ENCODE measurements at regions of chr20 and their contacts with region 1.

Region 1: DNA sequence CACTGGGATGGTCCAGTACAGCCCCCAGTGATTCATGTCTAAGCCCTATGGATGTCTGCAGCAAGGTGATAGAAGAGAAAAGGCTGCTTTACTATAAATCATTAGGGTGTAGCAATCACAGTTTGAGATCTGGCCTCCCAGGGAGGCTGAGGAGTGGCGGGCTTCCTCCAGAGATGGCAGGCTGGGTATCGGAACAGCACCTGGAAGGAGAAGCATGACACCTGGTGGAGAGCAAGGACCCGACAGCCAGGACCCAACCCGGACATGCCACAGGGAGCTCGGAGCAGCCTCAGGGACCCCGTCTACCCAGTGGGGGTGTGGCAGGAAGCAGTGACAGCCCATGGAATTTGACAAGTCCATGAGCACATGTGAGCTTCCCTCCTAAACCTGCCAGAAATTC is 114.8 kb upstream of the CD93 start:
- DNase-seq: peak; percentile 45
- H3K4me3 ChIP-seq: no peak overlapping the region
- H3K27ac ChIP-seq: no peak overlapping the region
- H3K4me1 ChIP-seq: no peaks in the 10 kb centered on the region
- H3K27me3 ChIP-seq: no peaks in the 10 kb centered on the region
- CTCF ChIP-seq: peak; percentile 62 to 84

Region 2: GRCh38 chr20:22846863-22847262 is 354.1 kb before region 1 on chr20:
- CTCF ChIA-PET with region 1: no interaction called
- dilution Hi-C with region 1: no loop called
- in situ Hi-C with region 1: no loop called
- intact Hi-C with region 1: loop called (anchors 5 kb)
- DNase-seq: no peak
- H3K4me3 ChIP-seq: no peak overlapping the region
- H3K27ac ChIP-seq: no peak overlapping the region
- H3K4me1 ChIP-seq: no peaks in the 10 kb centered on the region
- H3K27me3 ChIP-seq: no peaks in the 10 kb centered on the region
- CTCF ChIP-seq: no peak

Region 3: GRCh38 chr20:23021951-23022350 is 179.0 kb before region 1 on chr20:
- CTCF ChIA-PET with region 1: no interaction called
- dilution Hi-C with region 1: no loop called
- in situ Hi-C with region 1: no loop called
- intact Hi-C with region 1: loop called (anchors 1 kb)
- DNase-seq: peak; percentile 71
- H3K4me3 ChIP-seq: no peak overlapping the region
- H3K27ac ChIP-seq: no peak overlapping the region
- H3K4me1 ChIP-seq: peaks cover 4% of the 10 kb centered on the region
- H3K27me3 ChIP-seq: no peaks in the 10 kb centered on the region
- CTCF ChIP-seq: no peak

Region 4: DNA sequence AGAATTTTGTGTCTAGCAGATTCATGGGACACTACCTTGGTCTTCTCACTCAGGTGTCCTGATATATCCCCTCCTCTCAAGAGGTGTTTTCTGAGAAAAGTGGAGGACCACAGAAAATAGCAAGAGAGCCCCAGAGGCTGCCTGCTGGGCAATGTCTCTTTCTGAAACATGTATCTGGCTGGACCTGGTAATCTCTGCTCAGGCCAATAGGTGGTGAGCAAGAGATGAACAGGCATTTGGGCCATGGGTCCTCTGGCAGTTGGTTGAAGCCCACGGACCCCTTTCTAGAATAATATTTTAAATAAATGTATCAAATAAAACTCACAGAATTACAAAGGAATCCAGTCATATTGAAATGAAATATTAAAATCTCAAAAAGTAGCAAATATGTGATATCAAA is 142.7 kb before region 1 on chr20:
- CTCF ChIA-PET with region 1: no interaction called
- dilution Hi-C with region 1: no loop called
- in situ Hi-C with region 1: loop called in 1 of 2 experiments (anchors 10 kb)
- intact Hi-C with region 1: loop called (anchors 2 kb)
- DNase-seq: no peak
- H3K4me3 ChIP-seq: no peak overlapping the region
- H3K27ac ChIP-seq: no peak overlapping the region
- H3K4me1 ChIP-seq: no peaks in the 10 kb centered on the region
- H3K27me3 ChIP-seq: no peaks in the 10 kb centered on the region
- CTCF ChIP-seq: peak in 1 of 2 donors; percentile 37

Region 5: GRCh38 chr20:23106261-23106851 is 94.6 kb before region 1 on chr20:
- CTCF ChIA-PET with region 1: no interaction called
- dilution Hi-C with region 1: no loop called
- in situ Hi-C with region 1: no loop called
- intact Hi-C with region 1: no loop called
- DNase-seq: no peak
- H3K4me3 ChIP-seq: no peak overlapping the region
- H3K27ac ChIP-seq: no peak overlapping the region
- H3K4me1 ChIP-seq: peaks cover under 1% of the 10 kb centered on the region
- H3K27me3 ChIP-seq: no peaks in the 10 kb centered on the region
- CTCF ChIP-seq: no peak

Region 6: DNA sequence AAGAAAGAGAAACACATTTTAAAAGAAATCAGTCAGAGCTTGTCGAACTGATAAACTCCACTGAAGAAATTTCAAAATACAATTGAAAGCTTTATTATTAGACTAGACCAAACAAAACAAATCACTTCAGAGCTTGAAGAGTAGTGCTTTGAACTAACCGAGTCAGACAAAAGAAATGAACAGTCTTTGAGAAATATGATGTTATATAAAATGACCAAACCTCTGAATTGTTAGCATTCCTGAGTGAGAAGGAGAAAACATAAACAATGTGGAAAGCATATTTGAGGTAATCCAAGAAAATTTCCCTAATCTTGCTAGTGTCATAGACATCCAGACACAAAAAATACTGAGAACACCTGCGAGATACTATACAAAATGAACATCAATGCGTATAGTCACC is 501.1 kb after region 1 on chr20:
- CTCF ChIA-PET with region 1: no interaction called
- dilution Hi-C with region 1: no loop called
- in situ Hi-C with region 1: no loop called
- intact Hi-C with region 1: no loop called
- DNase-seq: no peak
- H3K4me3 ChIP-seq: no peak overlapping the region
- H3K27ac ChIP-seq: no peak overlapping the region
- H3K4me1 ChIP-seq: no peaks in the 10 kb centered on the region
- H3K27me3 ChIP-seq: peaks cover 2% of the 10 kb centered on the region
- CTCF ChIP-seq: no peak

Measured in mammary epithelial cell (primary cell).